Mammary epithelial cell (primary cell): ENCODE measurements at regions of chr5 and their contacts with region 1.

Region 1: GRCh38 chr5:37370864-37371726 is at the start of gene NUP155:
- DNase-seq: peak; percentile 99
- H3K4me3 ChIP-seq: peak within 1 kb of the TSS; percentile 78 to 96 (median 79)
- H3K27ac ChIP-seq: peak within 1 kb of the TSS; percentile 77
- H3K4me1 ChIP-seq: peaks cover 20% of the 10 kb centered on the region
- H3K27me3 ChIP-seq: no peaks in the 10 kb centered on the region
- CTCF ChIP-seq: no peak
- total RNA-seq, gene NUP155: 30.2 to 36.4 TPM

Region 2: DNA sequence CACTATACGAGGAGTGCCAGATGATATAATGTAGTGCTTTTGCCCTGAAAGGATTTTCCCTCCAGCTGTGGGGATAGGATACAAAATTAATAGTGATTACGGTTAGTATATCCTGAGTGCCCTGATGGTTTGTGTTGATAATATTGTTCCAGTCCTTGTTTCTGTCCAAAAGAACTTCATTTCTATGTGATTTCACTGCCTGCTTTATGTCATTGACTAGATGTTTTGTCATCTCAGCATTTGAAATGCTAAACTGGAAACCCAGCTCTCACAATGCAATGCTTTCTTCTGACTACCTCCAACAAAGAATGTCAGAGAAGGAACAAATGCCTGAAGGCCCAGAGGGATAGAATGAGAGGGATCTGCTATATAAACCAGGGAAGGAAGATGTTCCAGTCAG is 316.7 kb before region 1 on chr5:
- CTCF ChIA-PET with region 1: no interaction called
- dilution Hi-C with region 1: no loop called
- in situ Hi-C with region 1: no loop called
- intact Hi-C with region 1: no loop called
- DNase-seq: no peak
- H3K4me3 ChIP-seq: no peak overlapping the region
- H3K27ac ChIP-seq: no peak overlapping the region
- H3K4me1 ChIP-seq: no peaks in the 10 kb centered on the region
- H3K27me3 ChIP-seq: no peaks in the 10 kb centered on the region
- CTCF ChIP-seq: no peak

Region 3: DNA sequence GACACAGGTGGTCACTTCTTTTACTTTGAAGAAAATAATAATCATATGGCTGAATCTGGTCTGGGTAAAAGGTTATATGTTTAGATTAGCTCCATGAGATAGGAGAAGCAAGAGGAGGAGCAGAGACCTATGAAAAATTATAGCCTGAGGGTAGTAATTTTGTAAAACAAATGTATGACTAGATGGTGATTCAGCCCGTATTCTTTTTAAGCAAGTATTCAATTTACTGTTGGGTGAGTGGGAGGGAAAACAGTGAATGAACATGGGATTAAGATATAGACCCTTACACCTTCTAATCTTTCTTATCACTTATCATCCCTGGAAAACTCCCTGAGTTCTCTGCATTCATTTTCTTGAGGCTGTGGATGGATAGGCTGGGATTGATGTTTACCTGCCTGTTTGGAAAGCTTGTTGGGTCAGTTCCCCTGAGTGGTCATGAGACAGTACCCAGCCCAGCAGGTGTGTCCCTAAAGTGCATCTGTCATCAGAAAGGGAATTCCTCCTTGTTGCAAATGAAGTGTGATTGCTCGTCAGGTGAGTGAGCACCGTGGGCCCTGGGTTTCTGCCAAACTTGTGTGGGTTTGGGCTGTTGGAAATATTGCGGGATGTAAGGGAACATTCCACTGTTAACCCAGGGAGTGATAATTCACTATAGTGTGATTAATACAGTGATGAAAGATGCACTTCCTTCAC is 570.0 kb after region 1 on chr5:
- CTCF ChIA-PET with region 1: interaction called, 39 read pairs
- dilution Hi-C with region 1: no loop called
- in situ Hi-C with region 1: no loop called
- intact Hi-C with region 1: no loop called
- DNase-seq: peak; percentile 93
- H3K4me3 ChIP-seq: no peak overlapping the region
- H3K27ac ChIP-seq: peak overlapping the region; percentile 60
- H3K4me1 ChIP-seq: peaks cover 23% of the 10 kb centered on the region
- H3K27me3 ChIP-seq: no peaks in the 10 kb centered on the region
- CTCF ChIP-seq: no peak